ENCODE measurements at regions of chr11 and their contacts with region 1.

Region 1: GRCh38 chr11:125941619-125942611 is 3.9 kb upstream of the VSIG10L2 start:
- DNase-seq: peak; percentile 50
- H3K27ac ChIP-seq: no peak overlapping the region
- CTCF ChIP-seq: peak; percentile 42

Region 2: DNA sequence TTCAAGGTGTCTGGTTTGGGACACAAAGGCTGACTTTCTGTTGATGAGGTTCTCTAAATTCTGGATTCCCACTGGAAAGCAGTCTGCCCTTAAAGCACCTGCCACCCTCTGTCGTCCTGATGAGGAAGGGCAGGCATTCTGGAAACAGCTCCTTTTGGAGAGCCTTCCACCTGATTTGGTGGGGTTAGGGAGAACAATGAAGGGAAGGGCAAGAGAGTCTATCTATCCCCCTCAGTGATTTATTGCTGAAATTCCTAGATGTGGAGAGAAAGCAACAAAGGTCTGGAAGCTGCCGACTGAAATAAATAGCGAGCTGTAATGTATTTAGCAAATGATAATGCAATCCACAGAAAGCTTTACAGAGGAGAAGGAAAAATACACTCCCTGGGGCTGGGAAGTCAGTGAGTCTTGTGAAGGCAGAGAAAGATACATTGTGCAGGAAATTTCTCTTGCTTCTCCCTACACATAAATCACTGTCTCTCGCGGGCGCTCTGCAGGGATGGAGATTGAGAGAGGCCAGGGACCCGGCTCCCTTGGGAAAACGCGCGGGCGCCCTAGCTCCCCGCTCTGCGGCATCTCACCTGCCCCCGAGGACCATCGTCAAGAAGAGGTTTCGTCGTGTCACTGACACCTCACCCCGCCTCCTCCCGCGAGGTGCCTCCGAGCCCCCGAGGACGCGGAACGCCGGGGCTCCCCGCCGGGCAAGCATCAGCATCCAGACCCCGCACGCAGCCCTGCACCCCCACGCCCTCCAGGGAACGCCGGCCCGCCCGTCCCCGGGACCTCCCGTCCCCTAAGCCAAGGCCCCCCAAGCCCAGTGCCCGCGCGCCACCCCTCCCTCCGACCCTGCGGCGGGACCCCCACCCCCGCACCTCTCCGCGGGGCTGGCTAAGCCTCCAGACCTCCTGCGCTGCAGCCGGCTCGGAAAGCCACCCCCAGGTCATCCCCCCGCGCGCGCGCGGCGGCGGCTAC is 120.1 kb after region 1 on chr11:
- CTCF ChIA-PET with region 1: interaction called, 10 read pairs
- POLR2A ChIA-PET with region 1: no interaction called
- DNase-seq: peak; percentile 57
- H3K27ac ChIP-seq: peak overlapping the region; percentile 82
- CTCF ChIP-seq: peak; percentile 72

Measured in RWPE1 (cell line).